Activated CD4-positive, alpha-beta T cell treated with anti-CD3 and anti-CD28 coated beads for 36 hours (primary cell): ENCODE measurements at regions of chr7 and their contacts with region 1.

Region 1: DNA sequence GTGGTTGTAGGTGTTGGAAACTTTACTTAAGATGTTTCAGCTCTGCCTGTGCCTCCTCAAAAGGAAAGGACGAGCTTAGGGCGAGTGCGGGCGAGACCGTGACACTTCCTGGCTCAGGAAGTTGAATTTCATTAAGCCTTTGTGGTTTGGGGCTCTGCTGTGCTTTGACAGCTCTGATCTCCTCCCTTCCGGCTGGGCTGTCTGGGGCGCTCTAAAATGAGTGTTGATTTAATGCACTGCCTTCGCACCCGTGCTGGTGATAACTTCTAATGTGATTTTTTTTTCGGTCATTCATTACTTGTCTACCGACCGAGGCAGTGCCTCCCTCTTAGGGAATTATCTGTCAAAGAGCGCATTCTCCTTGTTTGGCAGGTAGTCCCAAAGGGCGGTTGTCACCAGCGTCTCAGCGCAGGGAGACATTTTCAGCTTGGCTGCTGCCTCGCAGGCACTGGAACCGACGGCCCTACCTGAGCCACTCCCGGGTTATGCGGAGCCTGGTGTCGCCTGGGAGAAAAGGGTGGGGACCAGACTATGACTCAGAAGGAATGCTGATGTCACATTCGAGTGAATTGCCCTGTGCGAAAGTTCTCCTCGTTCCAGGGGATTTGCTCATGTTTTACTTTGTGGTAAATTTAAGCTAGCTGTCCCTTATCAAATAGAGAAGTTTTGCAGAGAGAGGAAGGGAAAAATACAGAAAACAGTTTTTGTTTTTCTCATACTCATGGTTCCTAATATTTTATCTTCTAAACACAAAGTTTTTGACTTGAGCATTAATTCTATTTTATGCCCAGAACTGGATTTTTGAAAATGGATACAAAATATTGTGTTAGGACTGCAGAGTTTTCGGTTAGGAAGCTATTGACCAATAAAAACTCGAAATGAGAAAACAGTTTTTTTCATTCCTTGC is 920 bp downstream of the TES start:
- DNase-seq: peak; percentile 87
- ATAC-seq: peak; percentile 80
- H3K4me3 Mint-ChIP-seq: peak overlapping the region; percentile 97
- H3K27ac Mint-ChIP-seq: peak overlapping the region; percentile 98
- H3K4me1 Mint-ChIP-seq: peaks cover 55% of the 10 kb centered on the region
- H3K27me3 Mint-ChIP-seq: no peaks in the 10 kb centered on the region

Region 2: DNA sequence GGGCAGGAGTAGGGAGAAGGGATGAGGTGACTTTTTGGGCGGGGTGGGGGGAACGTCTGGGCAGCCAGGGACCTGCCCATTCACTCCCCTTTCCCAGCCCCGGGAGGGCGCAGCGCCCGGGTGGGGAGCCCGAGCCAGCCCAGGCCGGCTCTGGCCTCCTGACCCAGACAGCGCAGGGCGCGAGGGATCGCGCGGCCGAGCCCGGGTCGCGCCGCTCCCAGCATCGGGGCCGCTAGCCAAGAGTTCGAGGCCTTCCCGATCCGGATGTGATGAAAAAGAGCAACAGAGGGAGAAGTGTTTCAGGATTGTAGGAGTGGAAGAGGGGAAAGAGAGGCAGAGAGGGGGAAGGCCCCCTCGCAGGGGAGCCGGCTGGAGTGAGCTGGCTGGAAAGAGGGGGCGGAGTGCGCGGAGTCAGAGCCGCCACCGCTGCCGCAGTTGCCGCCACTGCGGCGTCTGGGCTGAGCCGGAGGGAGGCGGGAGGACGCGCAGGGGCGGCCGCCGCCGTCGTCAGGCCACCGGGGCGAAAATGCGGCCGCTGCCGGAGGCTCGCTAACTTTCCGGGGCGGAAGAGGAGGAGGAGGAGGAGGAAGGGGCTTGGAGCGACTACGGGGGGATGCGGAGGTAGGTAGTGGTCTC is 1289.1 kb before region 1 on chr7 and contains the start of gene MDFIC:
- CTCF ChIA-PET with region 1: no interaction called
- POLR2A ChIA-PET with region 1: no interaction called
- intact Hi-C with region 1: loop called (anchors 10 kb)
- DNase-seq: peak; percentile 83
- ATAC-seq: peak; percentile 62
- H3K4me3 Mint-ChIP-seq: peak within 1 kb of the TSS; percentile 89
- H3K27ac Mint-ChIP-seq: peak within 1 kb of the TSS; percentile 96
- H3K4me1 Mint-ChIP-seq: peaks cover 63% of the 10 kb centered on the region
- H3K27me3 Mint-ChIP-seq: no peaks in the 10 kb centered on the region
- total RNA-seq, gene MDFIC: 68.4 to 113 TPM

Region 3: DNA sequence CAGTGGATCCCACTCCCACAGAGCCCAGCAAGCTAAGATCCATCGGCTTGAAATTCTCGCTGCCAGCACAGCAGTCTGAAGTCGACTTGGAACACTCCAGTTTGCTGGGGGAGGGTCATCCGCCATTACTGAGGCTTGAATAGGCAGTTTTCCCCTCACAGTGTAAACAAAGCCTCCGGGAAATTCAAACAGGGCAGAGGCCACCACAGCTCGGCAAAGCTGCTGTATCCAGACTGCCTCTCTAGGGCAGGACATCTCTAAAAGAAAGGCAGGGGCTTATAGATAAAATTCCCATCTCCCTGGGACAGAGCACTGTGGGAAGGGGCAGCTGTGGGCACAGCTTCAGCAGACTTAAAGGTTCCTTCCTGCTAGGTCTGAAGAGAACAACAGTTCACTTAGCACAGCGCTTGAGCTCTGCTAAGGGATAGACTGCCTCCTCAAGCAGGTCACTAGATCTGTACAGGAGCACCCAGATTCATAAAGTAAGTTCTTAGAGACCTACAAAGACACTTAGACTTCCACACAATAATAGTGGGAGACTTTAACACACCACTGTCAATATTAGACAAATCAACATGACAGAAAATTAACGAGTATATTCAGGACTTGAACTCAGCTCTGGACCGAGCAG is 321.8 kb before region 1 on chr7:
- CTCF ChIA-PET with region 1: no interaction called
- POLR2A ChIA-PET with region 1: no interaction called
- intact Hi-C with region 1: no loop called
- DNase-seq: no peak
- ATAC-seq: no peak
- H3K4me3 Mint-ChIP-seq: no peak overlapping the region
- H3K27ac Mint-ChIP-seq: no peak overlapping the region
- H3K4me1 Mint-ChIP-seq: no peaks in the 10 kb centered on the region
- H3K27me3 Mint-ChIP-seq: no peaks in the 10 kb centered on the region

Region 4: DNA sequence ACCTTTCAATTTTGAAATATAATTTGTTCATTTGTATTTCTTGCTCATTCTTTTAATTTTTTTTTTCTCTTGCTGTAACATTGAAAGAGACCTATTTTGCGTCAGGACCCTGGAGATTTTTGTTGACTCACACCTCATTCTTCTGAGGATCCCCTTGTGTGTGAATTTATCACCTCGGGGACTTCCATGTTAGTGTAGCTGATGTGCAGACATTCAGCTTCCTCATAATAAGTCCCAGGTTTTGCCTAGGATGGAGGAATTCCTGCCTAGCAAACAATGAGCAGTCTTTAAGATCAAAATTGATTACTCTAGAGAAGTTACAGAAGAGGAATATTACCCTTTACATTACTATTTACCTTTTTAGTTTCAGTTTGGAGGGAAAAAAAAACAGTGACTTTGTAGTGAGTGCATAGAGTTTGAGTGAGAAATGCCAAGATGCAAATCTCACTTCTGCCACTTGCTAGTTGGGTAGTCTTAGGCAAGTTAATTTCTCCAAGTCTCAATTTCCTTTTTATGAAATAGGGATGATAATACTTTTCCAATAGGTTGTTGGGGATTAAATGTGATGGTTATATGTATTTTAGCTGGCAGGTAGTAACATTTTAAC is 13.3 kb after region 1 on chr7:
- CTCF ChIA-PET with region 1: interaction called, 11 read pairs
- POLR2A ChIA-PET with region 1: no interaction called
- intact Hi-C with region 1: loop called (anchors 1 kb)
- DNase-seq: no peak
- ATAC-seq: peak; percentile 65
- H3K4me3 Mint-ChIP-seq: peak overlapping the region; percentile 7
- H3K27ac Mint-ChIP-seq: peak overlapping the region; percentile 64
- H3K4me1 Mint-ChIP-seq: peaks cover 82% of the 10 kb centered on the region
- H3K27me3 Mint-ChIP-seq: no peaks in the 10 kb centered on the region

Region 5: GRCh38 chr7:116862234-116862950 is 651.1 kb after region 1 on chr7 and contains the start of gene CAPZA2:
- CTCF ChIA-PET with region 1: no interaction called
- POLR2A ChIA-PET with region 1: no interaction called
- intact Hi-C with region 1: loop called (anchors 1 to 2 kb)
- DNase-seq: peak; percentile 97
- ATAC-seq: peak; percentile 95
- H3K4me3 Mint-ChIP-seq: peak within 1 kb of the TSS; percentile 95
- H3K27ac Mint-ChIP-seq: peak within 1 kb of the TSS; percentile 96
- H3K4me1 Mint-ChIP-seq: peaks cover 40% of the 10 kb centered on the region
- H3K27me3 Mint-ChIP-seq: peaks cover 4% of the 10 kb centered on the region
- total RNA-seq, gene CAPZA2: 173 to 262 TPM

Region 6: DNA sequence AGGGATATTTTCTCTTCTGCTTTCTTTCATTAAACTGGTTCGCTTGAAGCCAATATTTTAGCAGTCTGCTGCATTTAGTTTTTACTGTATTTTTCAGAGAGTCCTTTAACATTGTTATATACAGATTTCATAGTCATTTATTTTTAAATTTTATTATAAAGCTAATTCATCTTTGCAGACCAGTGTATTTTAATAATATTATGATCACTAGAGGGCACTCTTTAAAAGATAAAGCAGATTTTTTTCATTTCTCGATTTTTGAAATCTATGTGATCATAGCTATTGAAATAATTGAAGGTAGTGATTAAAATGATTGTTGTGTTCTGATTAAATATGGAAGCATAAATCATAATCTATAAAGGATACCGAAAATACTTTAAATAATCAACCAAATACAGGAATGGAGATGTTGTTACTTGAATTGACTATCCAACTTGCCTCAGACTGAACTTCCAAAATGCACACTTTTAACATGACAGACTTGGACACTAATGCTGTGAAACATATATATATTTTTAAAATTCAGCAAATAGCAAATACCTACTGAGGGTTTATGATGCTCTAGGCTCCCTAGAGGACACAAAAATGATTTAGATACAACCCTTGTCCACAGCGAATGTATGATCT is 777.2 kb after region 1 on chr7:
- CTCF ChIA-PET with region 1: no interaction called
- POLR2A ChIA-PET with region 1: no interaction called
- intact Hi-C with region 1: no loop called
- DNase-seq: no peak
- ATAC-seq: no peak
- H3K4me3 Mint-ChIP-seq: no peak overlapping the region
- H3K27ac Mint-ChIP-seq: no peak overlapping the region
- H3K4me1 Mint-ChIP-seq: peaks cover 5% of the 10 kb centered on the region
- H3K27me3 Mint-ChIP-seq: no peaks in the 10 kb centered on the region

Region 7: DNA sequence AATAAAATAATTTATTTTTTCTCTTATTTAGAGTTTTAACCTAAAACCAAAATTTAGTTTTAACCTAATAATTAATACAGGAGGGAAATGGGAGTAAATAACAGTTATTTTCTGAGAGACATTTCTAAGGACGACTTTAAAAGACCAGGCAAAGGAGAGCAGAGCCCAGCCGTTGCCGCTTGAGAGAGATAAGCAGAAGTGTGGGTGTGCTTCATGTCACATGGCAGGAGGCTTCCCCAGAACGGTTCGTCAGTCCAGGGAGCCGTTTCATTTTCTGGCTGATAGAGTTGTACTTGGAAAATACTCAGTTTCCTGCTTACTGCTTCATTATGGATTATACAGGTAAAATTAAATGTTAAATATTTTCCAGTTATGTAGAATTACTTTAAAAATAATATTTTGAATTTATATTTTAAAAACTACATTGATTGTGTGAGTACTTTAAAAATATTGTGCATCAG is 803.4 kb after region 1 on chr7:
- CTCF ChIA-PET with region 1: no interaction called
- POLR2A ChIA-PET with region 1: no interaction called
- intact Hi-C with region 1: loop called in 1 of 2 experiments (anchors 10 kb)
- DNase-seq: peak; percentile 49
- ATAC-seq: no peak
- H3K4me3 Mint-ChIP-seq: no peak overlapping the region
- H3K27ac Mint-ChIP-seq: no peak overlapping the region
- H3K4me1 Mint-ChIP-seq: peaks cover 56% of the 10 kb centered on the region
- H3K27me3 Mint-ChIP-seq: peaks cover 2% of the 10 kb centered on the region

Region 8: GRCh38 chr7:118183786-118184564 is 1972.7 kb after region 1 on chr7 and contains the start of gene LSM8:
- CTCF ChIA-PET with region 1: no interaction called
- POLR2A ChIA-PET with region 1: no interaction called
- intact Hi-C with region 1: loop called in 1 of 2 experiments (anchors 10 kb)
- DNase-seq: peak; percentile 98
- ATAC-seq: peak; percentile 99
- H3K4me3 Mint-ChIP-seq: peak within 1 kb of the TSS; percentile 99
- H3K27ac Mint-ChIP-seq: peak within 1 kb of the TSS; percentile 100
- H3K4me1 Mint-ChIP-seq: peaks cover 34% of the 10 kb centered on the region
- H3K27me3 Mint-ChIP-seq: no peaks in the 10 kb centered on the region
- total RNA-seq, gene LSM8: 35.0 to 49.9 TPM